Esophagus muscularis mucosa (tissue), 4 donors: ENCODE measurements at regions of chr4 and their contacts with region 1.

Region 1: GRCh38 chr4:102449751-102450352 is 51.3 kb upstream of the NFKB1 start:
- DNase-seq: no peak
- H3K4me3 ChIP-seq: no peak overlapping the region
- H3K27ac ChIP-seq: no peak overlapping the region
- H3K4me1 ChIP-seq: peaks cover 0 to 7% (median 2%) of the 10 kb centered on the region in 4 donors
- H3K27me3 ChIP-seq: no peaks in the 10 kb centered on the region
- CTCF ChIP-seq: peak; percentile 51 to 56 (median 56)
- EP300 ChIP-seq: no peak
- POLR2A ChIP-seq: no peak

Region 2: GRCh38 chr4:102404431-102405028 is 45.3 kb before region 1 on chr4:
- intact Hi-C with region 1: no loop called
- DNase-seq: no peak
- H3K4me3 ChIP-seq: no peak overlapping the region
- H3K27ac ChIP-seq: no peak overlapping the region
- H3K4me1 ChIP-seq: no peaks in the 10 kb centered on the region
- H3K27me3 ChIP-seq: no peaks in the 10 kb centered on the region
- CTCF ChIP-seq: no peak
- EP300 ChIP-seq: no peak
- POLR2A ChIP-seq: no peak

Region 3: DNA sequence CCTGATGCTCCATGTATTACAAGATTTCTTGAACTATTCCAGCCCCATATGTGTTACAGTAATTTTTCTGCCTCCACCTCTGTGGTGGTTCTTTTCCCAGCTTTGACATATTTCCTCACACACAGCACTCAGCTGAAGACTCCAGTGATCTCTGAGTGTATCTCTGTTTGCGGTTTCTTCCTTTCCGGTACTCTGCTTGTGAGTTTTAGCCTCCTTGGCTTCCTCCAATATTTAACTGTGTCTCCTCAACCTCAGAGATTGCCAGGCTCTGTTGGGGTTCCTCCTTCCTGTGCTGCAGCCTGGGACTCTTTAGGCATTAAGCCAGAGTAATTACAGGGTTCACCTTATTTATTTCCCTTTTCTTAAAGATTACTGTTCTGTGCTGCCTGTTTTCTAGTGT is 124.5 kb after region 1 on chr4:
- intact Hi-C with region 1: no loop called
- DNase-seq: no peak
- H3K4me3 ChIP-seq: no peak overlapping the region
- H3K27ac ChIP-seq: no peak overlapping the region
- H3K4me1 ChIP-seq: peaks cover 0 to 15% (median 7%) of the 10 kb centered on the region in 4 donors
- H3K27me3 ChIP-seq: no peaks in the 10 kb centered on the region
- CTCF ChIP-seq: no peak
- EP300 ChIP-seq: no peak
- POLR2A ChIP-seq: no peak

Region 4: GRCh38 chr4:102610007-102610406 is 160.2 kb after region 1 on chr4:
- intact Hi-C with region 1: loop called (anchors 10 kb)
- DNase-seq: no peak
- H3K4me3 ChIP-seq: no peak overlapping the region
- H3K27ac ChIP-seq: no peak overlapping the region
- H3K4me1 ChIP-seq: no peaks in the 10 kb centered on the region
- H3K27me3 ChIP-seq: no peaks in the 10 kb centered on the region
- CTCF ChIP-seq: peak in 1 of 3 experiments; percentile 21
- EP300 ChIP-seq: no peak
- POLR2A ChIP-seq: no peak